ENCODE measurements at regions of chr11 and their contacts with region 1.

Region 1: DNA sequence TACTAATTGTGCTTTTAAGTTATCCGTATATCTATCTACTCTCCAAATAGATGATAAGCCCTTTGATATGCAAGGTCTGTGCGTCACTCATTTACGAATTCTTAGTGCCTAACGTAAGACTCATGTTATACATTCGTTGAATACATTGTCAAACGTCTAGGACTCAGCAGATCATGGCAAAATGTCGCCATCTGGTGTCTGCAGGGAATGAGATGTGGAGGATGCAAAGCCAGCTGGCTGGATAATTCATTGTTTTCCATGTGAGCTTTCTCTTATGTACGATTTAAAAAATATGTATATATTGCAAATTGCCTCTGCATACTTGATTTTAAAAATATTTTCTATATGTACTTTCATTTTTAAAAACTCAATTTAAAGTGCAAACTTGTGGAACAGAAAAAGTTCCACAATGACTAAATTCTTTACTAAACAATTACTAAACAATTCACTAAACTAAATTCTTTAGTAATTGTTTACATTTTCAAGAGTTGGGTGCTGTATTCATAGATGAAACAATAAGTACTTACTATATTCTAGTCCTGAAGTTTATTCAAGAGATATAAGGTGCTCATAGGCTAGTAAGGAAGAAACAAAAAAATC is 33.8 kb downstream of the ZNF202 start:
- DNase-seq: peak in 1 of 2 donors; percentile 30
- H3K4me3 ChIP-seq: no peak overlapping the region
- CTCF ChIP-seq: peak in 1 of 3 donors; percentile 20
- POLR2A ChIP-seq: no peak

Region 2: GRCh38 chr11:123640677-123641494 is 66.8 kb before region 1 on chr11:
- intact Hi-C with region 1: loop called (anchors 5 kb)
- DNase-seq: no peak
- H3K4me3 ChIP-seq: no peak overlapping the region
- CTCF ChIP-seq: no peak
- POLR2A ChIP-seq: no peak

Region 3: DNA sequence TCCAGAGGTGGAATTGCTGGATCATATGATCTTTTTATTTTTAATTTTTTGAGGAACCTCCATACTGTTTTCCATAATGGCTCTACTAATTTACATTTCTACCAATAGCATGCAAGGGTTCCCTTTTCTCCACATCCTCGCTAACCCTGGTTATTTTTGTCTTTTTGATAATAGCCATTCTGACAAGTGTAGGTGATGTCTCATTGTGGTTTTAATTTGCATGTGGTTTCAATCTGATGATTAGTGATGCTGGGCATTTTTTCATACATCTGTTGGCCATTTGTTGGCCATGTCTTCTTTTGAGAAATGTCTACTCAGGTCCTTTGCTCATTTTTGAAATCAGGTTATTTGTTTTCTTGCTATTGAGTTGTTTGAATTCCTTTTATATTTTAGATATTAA is 216.3 kb after region 1 on chr11:
- intact Hi-C with region 1: loop called (anchors 5 kb)
- DNase-seq: no peak
- H3K4me3 ChIP-seq: no peak overlapping the region
- CTCF ChIP-seq: no peak
- POLR2A ChIP-seq: no peak

Measured in lower leg skin (tissue), 4 donors.